ENCODE measurements at regions of chr11 and their contacts with region 1.

Region 1: DNA sequence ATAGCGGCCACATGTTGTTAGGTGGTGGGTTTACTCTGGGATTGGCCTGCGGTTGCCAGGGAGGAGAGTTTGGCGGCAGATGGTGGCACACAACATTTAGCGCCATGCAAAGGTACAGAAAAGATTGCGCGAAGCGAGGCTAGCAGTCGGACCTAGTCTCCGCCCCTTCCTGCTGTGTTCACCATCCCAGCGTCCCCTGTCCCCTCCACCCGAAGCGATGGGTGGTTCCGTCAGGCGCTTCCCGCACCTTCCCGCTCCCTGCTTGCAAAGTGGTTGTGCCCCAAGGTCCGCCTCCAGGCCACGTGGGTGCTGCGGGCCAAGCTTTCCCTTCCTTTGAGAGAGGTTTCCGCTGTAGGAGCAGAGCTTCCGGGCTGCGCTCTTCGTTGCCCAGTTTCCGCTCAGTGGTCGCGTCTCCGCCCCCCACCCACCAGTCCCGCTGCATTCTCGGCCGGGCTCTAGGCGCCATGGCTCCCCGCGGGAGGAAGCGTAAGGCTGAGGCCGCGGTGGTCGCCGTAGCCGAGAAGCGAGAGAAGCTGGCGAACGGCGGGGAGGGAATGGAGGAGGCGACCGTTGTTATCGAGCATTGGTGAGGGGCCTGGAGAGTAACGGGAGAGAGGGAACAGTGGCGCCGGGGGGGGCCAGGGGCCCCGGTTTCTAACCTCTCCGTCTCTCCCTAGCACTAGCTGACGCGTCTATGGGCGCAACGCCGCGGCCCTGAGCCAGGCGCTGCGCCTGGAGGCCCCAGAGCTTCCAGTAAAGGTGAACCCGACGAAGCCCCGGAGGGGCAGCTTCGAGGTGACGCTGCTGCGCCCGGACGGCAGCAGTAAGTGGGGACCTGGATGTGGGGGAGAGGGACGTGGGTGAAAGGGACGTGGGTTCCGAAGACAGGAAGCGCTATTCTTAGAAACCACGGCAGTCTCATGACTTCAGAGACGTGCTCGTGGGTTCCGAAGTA is at the start of gene SELENOH:
- DNase-seq: peak; percentile 98
- H3K4me3 Mint-ChIP-seq: peak within 1 kb of the TSS; percentile 97
- H3K27ac Mint-ChIP-seq: peak within 1 kb of the TSS; percentile 99
- H3K4me1 Mint-ChIP-seq: peaks cover 32% of the 10 kb centered on the region
- H3K27me3 Mint-ChIP-seq: no peaks in the 10 kb centered on the region
- total RNA-seq, gene SELENOH: 249 to 282 TPM

Region 2: GRCh38 chr11:57657194-57658022 is 84.0 kb before region 1 on chr11 and contains the start of gene CLP1:
- CTCF ChIA-PET with region 1: no interaction called
- intact Hi-C with region 1: loop called (anchors 1 kb)
- DNase-seq: peak; percentile 100
- H3K4me3 Mint-ChIP-seq: peak within 1 kb of the TSS; percentile 92
- H3K27ac Mint-ChIP-seq: peak within 1 kb of the TSS; percentile 90
- H3K4me1 Mint-ChIP-seq: peaks cover 34% of the 10 kb centered on the region
- H3K27me3 Mint-ChIP-seq: no peaks in the 10 kb centered on the region
- total RNA-seq, gene CLP1: 11.3 to 14.2 TPM

Region 3: DNA sequence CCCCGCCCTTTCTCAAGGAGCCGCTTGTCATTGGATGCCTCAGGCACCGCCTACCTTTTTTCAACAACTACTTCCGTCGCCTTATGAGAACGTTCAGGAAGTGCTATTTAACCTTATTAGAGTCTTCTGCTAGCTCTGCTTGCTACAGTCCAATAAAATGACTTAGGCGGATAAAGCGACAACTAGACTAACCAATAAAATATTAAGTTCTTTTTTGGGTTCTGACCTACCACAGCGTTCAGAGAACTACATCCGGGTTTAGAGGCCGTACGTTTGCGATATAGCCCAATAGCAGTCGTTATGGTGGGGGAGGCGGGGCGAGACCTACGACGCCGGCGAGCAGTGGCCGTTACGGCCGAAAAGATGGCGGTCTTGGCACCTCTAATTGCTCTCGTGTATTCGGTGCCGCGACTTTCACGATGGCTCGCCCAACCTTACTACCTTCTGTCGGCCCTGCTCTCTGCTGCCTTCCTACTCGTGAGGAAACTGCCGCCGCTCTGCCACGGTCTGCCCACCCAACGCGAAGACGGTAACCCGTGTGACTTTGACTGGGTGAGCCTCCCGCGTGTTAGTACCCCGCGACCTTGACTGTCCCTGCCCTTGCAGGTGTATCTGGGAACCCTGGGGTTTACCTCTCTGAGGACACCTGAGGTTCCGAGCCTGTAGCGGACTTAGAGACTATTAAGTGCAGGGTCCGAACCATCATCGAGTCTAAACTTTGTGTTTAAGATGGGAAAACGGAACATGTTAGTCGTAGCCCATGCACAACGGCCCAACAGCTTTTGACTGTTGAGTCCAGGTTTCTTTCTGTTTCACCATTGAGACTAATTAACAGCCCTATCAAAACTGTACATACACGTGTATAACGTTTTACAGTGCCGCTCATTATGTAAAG is 28.9 kb before region 1 on chr11 and contains the start of gene TMX2:
- CTCF ChIA-PET with region 1: no interaction called
- intact Hi-C with region 1: loop called (anchors 1 kb)
- DNase-seq: peak; percentile 95
- H3K4me3 Mint-ChIP-seq: peak within 1 kb of the TSS; percentile 99
- H3K27ac Mint-ChIP-seq: peak within 1 kb of the TSS; percentile 92
- H3K4me1 Mint-ChIP-seq: peaks cover 50% of the 10 kb centered on the region
- H3K27me3 Mint-ChIP-seq: no peaks in the 10 kb centered on the region
- total RNA-seq, gene TMX2: 49.8 to 54.7 TPM

Region 4: DNA sequence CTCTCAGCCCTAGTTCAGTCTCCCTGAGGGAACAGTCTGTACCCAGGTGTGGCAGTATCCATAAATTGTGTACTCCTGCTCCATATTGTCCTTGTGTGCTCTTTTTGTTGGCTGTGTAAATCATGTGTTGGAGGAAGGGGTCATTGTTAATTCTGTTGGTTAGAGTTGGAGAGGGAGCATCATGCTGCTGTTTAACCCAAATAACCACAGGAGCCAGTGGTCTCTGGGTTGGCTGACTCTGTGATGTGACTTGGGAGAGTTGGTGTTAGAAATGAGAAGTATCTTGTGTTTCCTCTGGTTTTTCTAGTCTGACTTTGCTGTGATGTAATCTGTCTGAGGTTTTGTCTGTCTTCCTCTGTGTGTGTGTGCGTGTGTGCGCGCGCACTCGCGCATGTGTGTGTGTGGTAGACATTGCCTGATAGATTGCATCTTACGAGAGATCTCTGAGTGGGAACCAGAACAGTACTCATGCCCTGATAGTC is 50.7 kb after region 1 on chr11:
- CTCF ChIA-PET with region 1: no interaction called
- intact Hi-C with region 1: loop called (anchors 1 kb)
- DNase-seq: peak; percentile 87
- H3K4me3 Mint-ChIP-seq: peak overlapping the region; percentile 59
- H3K27ac Mint-ChIP-seq: peak overlapping the region; percentile 94
- H3K4me1 Mint-ChIP-seq: peaks cover 34% of the 10 kb centered on the region
- H3K27me3 Mint-ChIP-seq: no peaks in the 10 kb centered on the region